ENCODE measurements at regions of chr1 and their contacts with region 1.

Region 1: DNA sequence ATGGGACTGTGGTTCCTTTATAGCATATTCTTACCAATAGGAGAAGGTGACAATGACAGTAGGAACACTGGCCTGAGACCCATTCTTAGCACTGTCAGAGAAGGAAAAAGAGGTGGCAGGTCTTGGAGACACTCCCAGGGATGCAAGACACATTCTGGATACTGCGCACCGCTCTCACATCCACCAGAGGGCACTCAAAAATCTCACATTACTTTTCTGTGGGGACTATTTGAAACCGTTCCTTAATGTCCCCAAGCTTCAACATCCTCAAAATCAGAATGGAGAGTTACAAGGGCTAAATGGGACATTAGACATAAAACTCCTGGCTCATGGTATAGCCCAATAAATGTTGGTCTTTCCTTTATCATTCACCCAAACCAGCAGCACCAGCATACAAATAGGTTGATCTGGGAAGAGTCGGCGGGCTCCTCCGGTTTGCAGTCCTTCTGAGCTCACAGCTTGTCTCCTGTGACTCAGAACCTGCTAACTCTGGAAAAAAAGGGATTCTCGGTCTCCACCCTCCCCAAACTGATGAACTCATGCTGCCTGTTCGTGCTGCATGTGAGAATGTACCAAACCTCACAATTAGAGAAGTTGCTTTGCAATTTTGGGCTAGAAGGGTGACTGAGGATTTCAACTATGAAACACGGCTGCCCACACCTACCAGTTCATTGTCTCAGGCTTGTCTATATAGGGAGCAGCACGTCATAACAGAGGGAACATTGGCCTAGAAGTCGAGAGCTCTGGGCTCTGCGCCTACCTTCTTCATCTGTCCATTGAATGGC is 40.2 kb downstream of the IL12RB2 start:
- DNase-seq: peak; percentile 33 to 71 (median 58)
- ATAC-seq: peak; percentile 96
- H3K4me3 ChIP-seq: no peak overlapping the region
- H3K27ac ChIP-seq: no peak overlapping the region
- H3K4me1 ChIP-seq: peaks cover 0 to 6% of the 10 kb centered on the region in 2 experiments; a peak in 1 of 5 replicates
- H3K27me3 ChIP-seq: no peaks in the 10 kb centered on the region
- CTCF ChIP-seq: peak; percentile 69 to 87 (median 84)
- EP300 ChIP-seq: no peak
- POLR2A ChIP-seq: no peak
- RAD21 ChIP-seq: peak; percentile 73 to 93

Region 2: DNA sequence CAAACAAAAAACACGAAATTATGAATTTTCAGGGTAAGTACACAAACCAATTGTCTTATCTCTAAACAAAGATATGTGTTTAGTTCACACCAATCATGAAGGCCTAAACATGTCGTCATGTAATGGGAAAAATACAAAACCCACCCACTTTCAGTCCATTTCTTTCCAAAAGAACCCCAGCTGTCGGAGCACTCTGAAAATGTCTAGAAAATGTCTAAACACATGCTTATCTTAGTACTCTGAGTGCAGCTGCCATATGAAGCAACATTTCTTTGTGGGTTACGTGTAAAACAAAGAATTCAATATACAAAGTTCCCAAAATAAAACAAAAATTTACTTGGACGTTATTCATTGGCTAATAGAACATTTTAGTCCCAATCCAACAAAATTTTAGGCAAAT is 59.6 kb after region 1 on chr1:
- CTCF ChIA-PET with region 1: no interaction called
- POLR2A ChIA-PET with region 1: interaction called, 3 read pairs
- in situ Hi-C with region 1: no loop called
- intact Hi-C with region 1: loop called (anchors 5 kb)
- DNase-seq: no peak
- ATAC-seq: no peak
- H3K4me3 ChIP-seq: no peak overlapping the region
- H3K27ac ChIP-seq: no peak overlapping the region
- H3K4me1 ChIP-seq: no peaks in the 10 kb centered on the region
- H3K27me3 ChIP-seq: no peaks in the 10 kb centered on the region
- CTCF ChIP-seq: no peak
- EP300 ChIP-seq: no peak
- POLR2A ChIP-seq: no peak
- RAD21 ChIP-seq: no peak

Region 3: DNA sequence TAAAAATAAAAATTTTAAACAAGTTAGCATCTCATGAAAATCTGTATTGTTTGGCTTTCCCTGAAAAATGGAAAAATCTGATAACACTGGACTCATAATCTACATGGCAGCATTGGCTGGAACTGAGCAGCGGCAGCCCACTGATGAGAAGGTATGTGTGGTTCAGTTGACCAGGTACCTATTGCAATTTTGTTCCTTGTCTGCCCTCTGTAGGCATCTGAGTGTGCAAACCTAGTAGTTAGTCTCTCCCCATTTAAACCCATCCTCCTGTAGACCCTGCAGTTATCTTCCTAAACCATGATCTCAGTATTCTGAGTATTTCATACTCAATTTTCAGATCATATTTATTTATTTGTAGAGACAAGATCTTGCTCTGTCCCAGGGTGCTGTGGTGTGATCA is 141.8 kb after region 1 on chr1:
- CTCF ChIA-PET with region 1: interaction called, 12 read pairs
- POLR2A ChIA-PET with region 1: no interaction called
- in situ Hi-C with region 1: no loop called
- intact Hi-C with region 1: loop called (anchors 1 kb)
- DNase-seq: peak in 3 of 4 experiments; percentile 19 to 61 (median 60)
- ATAC-seq: peak; percentile 92
- H3K4me3 ChIP-seq: no peak overlapping the region
- H3K27ac ChIP-seq: no peak overlapping the region
- H3K4me1 ChIP-seq: peaks cover 0 to 5% of the 10 kb centered on the region in 2 experiments; a peak in 3 of 5 replicates
- H3K27me3 ChIP-seq: no peaks in the 10 kb centered on the region
- CTCF ChIP-seq: peak; percentile 41 to 76 (median 49); a peak in 5 of 6 replicates
- EP300 ChIP-seq: no peak
- POLR2A ChIP-seq: no peak
- RAD21 ChIP-seq: peak; percentile 55 to 89

Region 4: GRCh38 chr1:67500413-67500959 is 152.6 kb after region 1 on chr1:
- CTCF ChIA-PET with region 1: interaction called, 25 read pairs
- POLR2A ChIA-PET with region 1: interaction called, 3 read pairs
- in situ Hi-C with region 1: loop called (anchors 5 kb)
- intact Hi-C with region 1: loop called (anchors 1 kb)
- DNase-seq: peak; percentile 89 to 95 (median 90)
- ATAC-seq: peak; percentile 99
- H3K4me3 ChIP-seq: no peak overlapping the region
- H3K27ac ChIP-seq: no peak overlapping the region
- H3K4me1 ChIP-seq: peaks cover 0 to 5% of the 10 kb centered on the region in 2 experiments; a peak in 3 of 5 replicates
- H3K27me3 ChIP-seq: no peaks in the 10 kb centered on the region
- CTCF ChIP-seq: peak; percentile 97 to 99 (median 98)
- EP300 ChIP-seq: no peak
- POLR2A ChIP-seq: no peak
- RAD21 ChIP-seq: peak; percentile 98 to 99